ENCODE measurements at regions of chr5 and their contacts with region 1.

Region 1: GRCh38 chr5:6745706-6746222 is 32.5 kb downstream of the TENT4A start:
- DNase-seq: no peak
- ATAC-seq: peak; percentile 75
- H3K4me3 Mint-ChIP-seq: no peak overlapping the region
- H3K27ac Mint-ChIP-seq: no peak overlapping the region
- H3K4me1 Mint-ChIP-seq: peaks cover 7% of the 10 kb centered on the region
- H3K27me3 Mint-ChIP-seq: no peaks in the 10 kb centered on the region

Region 2: DNA sequence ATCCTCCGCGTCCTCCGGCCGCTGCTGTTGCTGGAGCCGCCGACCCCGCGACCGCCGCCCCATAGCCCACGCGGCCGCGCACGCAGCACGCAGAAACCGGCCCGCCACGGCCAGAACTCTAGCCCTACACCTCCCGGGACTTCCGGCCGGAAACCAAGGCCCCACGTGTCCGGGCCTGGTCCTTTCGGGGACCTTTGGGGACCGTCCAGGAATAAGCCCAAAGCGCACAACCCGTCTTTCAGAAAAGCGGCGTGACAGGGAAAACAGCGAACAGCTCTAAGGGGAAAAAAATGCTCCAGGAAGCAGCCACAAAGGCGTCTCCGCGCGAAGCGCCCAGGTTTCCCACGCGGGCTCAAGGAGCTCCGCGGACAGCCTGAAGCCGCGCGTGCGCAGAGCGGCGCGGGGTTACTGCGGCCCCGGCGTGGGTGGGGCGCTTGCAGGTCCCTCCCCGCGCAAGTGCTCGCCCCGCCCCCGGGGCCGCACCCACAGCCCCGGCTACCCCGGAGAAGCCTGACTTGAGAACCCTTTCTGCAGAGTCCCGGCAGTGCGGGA is 112.8 kb before region 1 on chr5 and contains the starts of genes NSUN2 and SRD5A1:
- CTCF ChIA-PET with region 1: interaction called, 15 read pairs
- DNase-seq: peak; percentile 92
- ATAC-seq: peak; percentile 91
- H3K4me3 Mint-ChIP-seq: peak within 1 kb of the TSS; percentile 97
- H3K27ac Mint-ChIP-seq: peak within 1 kb of the TSS; percentile 98
- H3K4me1 Mint-ChIP-seq: peaks cover 43% of the 10 kb centered on the region
- H3K27me3 Mint-ChIP-seq: no peaks in the 10 kb centered on the region
- total RNA-seq, gene NSUN2: 79.8 to 111 TPM
- total RNA-seq, gene SRD5A1: 11.0 to 16.2 TPM

Measured in activated CD8-positive, alpha-beta memory T cell treated with anti-CD3 and anti-CD28 coated beads, Interleukin-2, amount 10 ng/mL, durations not matched to agents 7 days and 5 days (primary cell).